Activated T-helper 2 cell treated with anti-CD3 and anti-CD28 coated beads, Interferon-gamma antibody, Interleukin-2, Interleukin-4, amounts not matched to agents 10 μg/mL and 5 μg/mL and 100 μg/mL, durations not matched to agents 14 hours and 24 hours and 36 hours (primary cell): ENCODE measurements at regions of chr5 and their contacts with region 1.

Region 1: DNA sequence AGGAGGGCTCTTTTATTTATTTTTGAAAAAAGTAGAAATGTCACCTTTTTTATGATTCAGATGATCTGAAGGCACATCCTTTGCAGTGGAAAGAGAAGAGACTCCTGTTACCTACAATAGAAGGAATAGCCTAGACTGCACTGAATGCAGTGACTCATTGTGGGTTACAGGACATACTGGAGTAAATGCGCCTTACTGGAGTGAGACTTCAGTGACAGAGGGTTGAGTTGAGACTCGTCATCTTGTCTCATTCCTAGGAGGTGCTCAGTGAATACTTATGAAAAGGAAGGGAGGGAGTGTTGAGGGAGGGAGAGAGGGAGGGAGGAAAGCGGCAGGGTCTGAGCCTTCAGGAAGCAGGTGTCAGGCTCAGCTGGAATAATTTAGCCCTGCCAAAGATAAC is 25.2 kb downstream of the ANKRA2 start:
- DNase-seq: no peak
- H3K4me3 Mint-ChIP-seq: no peak overlapping the region
- H3K27ac Mint-ChIP-seq: no peak overlapping the region
- H3K4me1 Mint-ChIP-seq: peaks cover 13% of the 10 kb centered on the region
- H3K27me3 Mint-ChIP-seq: peaks cover 10% of the 10 kb centered on the region

Region 2: DNA sequence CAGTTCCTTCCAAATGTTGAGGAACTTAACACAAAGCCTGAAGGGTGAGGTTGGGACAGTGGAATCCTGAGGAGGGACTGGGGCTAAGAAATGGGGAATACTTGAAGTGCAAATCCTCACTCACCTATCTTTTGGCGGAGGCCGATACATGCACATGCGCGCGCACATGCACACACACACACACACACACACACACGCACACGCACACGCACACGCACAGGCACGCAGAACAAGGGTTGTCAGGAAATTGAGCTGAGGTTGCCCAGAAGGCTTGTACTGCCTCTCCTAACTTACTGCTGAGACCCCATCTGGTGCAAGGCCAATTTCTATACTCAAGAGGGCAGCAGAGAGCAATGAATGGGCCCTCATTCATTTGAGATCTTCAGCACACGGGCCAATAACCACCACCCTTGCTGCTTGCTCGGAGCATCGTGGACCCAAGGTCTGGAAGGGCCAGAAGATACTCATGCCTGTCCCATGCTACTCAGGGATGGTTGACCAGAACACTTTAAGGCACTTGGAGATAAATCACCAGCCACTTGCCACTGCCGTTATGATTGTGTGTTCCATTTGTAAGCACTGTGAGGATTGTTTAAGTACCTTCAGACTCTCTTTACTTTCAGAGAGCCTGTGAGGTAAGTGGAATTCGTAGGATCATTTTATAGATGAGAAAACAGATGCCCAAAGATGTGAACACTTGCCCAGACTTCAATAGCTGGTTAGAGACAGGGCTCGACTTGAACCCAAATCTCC is 20.5 kb before region 1 on chr5:
- intact Hi-C with region 1: loop called (anchors 1 kb)
- DNase-seq: peak; percentile 70
- H3K4me3 Mint-ChIP-seq: peak overlapping the region; percentile 21
- H3K27ac Mint-ChIP-seq: peak overlapping the region; percentile 28
- H3K4me1 Mint-ChIP-seq: peaks cover 8% of the 10 kb centered on the region
- H3K27me3 Mint-ChIP-seq: no peaks in the 10 kb centered on the region

Region 3: DNA sequence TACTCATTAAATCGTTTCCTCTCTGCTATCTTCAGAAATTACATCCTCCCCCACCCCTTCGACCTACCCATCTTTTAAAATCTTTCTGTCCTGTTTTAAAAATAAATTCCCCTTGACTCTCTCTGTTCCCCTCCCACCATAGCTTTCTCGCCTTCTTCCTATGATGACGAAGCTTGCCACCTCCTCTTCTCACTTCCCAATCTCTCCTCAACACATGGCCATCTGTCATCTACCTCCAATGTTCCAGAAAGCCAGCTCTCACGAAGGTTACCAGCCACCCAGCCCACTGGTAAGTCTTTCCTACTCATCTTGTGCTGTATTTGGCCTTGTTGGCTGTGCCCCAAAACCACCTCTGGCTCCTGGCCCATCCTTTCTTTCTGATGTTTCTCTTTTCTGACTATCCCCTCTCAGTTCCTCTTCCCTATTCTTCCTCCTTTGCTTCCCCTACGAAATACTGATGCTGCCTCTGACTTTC is 754.1 kb after region 1 on chr5:
- intact Hi-C with region 1: no loop called
- DNase-seq: no peak
- H3K4me3 Mint-ChIP-seq: no peak overlapping the region
- H3K27ac Mint-ChIP-seq: no peak overlapping the region
- H3K4me1 Mint-ChIP-seq: no peaks in the 10 kb centered on the region
- H3K27me3 Mint-ChIP-seq: peaks cover 12% of the 10 kb centered on the region